K562 (cell line): ENCODE measurements at regions of chr6 and their contacts with region 1.

Region 1: DNA sequence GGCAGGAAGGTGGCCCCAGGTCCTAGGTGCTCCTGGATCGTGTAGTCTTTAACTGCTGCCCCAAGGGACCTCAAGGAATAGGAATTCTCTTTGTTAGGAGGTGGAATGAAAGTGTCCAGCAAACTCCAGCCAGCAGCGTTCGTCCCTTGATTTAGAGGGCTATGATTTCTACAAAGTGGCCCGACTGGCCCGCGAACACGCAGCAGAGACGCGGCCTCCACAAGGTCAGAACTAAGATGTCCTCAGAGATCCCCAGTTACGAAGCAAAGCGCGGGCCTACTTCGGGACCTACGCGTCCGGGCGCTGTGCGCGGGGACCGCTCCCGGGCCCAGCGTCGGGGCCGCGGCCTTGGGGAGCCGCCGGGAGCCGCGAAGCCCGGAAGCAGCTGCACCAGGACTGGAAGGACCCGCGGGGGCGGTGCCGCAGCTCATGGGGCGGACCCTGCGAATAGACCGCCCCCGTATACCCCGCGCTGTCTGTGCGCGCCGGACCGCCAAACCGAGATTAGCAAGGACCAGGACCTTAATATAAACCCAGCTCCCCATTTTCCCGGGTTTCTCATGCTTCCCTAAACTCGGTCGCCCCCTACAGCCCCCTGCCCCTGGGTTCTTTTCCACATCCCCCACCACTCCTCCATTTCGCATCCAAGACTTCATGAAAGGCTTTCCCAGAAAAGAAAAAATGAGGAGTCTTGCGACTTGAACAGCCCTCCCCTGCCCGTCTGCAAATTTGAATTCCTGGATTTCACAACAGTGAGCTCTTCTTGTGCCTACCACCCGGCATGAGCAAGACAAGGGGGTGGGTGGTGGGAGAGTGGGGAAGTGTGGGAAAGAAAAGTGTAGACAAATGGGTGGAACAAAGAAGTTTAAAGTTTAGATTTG is at the start of gene C6orf47:
- DNase-seq: peak; percentile 93 to 99 (median 96)
- ATAC-seq: peak; percentile 82
- H3K4me3 ChIP-seq: peak within 1 kb of the TSS; percentile 52
- H3K27ac ChIP-seq: peak within 1 kb of the TSS; percentile 80
- H3K4me1 ChIP-seq: peaks cover 47 to 65% of the 10 kb centered on the region in 2 experiments
- H3K27me3 ChIP-seq: no peaks in the 10 kb centered on the region
- CTCF ChIP-seq: no peak
- EP300 ChIP-seq: 0 out of 2 replicates have a peak, but pooled peaks have one; percentile 62
- POLR2A ChIP-seq: peak; percentile 93
- RAD21 ChIP-seq: peak; percentile 5 to 28; a peak in 3 of 4 replicates
- polyA plus RNA-seq, gene C6orf47: 0.14 to 0.27 TPM

Region 2: GRCh38 chr6:31619805-31620585 is 40.6 kb before region 1 on chr6:
- CTCF ChIA-PET with region 1: no interaction called
- POLR2A ChIA-PET with region 1: interaction called, 20 read pairs
- in situ Hi-C with region 1: no loop called
- intact Hi-C with region 1: loop called (anchors 1 kb)
- DNase-seq: peak; percentile 93 to 100 (median 97)
- ATAC-seq: peak; percentile 92
- H3K4me3 ChIP-seq: peak overlapping the region; percentile 96
- H3K27ac ChIP-seq: peak overlapping the region; percentile 98
- H3K4me1 ChIP-seq: peaks cover 28 to 37% of the 10 kb centered on the region in 2 experiments
- H3K27me3 ChIP-seq: no peaks in the 10 kb centered on the region
- CTCF ChIP-seq: no peak; a peak in 1 of 6 replicates
- EP300 ChIP-seq: peak; percentile 71
- POLR2A ChIP-seq: peak; percentile 99
- RAD21 ChIP-seq: peak in 1 of 2 experiments; percentile 18; a peak in 1 of 4 replicates

Region 3: DNA sequence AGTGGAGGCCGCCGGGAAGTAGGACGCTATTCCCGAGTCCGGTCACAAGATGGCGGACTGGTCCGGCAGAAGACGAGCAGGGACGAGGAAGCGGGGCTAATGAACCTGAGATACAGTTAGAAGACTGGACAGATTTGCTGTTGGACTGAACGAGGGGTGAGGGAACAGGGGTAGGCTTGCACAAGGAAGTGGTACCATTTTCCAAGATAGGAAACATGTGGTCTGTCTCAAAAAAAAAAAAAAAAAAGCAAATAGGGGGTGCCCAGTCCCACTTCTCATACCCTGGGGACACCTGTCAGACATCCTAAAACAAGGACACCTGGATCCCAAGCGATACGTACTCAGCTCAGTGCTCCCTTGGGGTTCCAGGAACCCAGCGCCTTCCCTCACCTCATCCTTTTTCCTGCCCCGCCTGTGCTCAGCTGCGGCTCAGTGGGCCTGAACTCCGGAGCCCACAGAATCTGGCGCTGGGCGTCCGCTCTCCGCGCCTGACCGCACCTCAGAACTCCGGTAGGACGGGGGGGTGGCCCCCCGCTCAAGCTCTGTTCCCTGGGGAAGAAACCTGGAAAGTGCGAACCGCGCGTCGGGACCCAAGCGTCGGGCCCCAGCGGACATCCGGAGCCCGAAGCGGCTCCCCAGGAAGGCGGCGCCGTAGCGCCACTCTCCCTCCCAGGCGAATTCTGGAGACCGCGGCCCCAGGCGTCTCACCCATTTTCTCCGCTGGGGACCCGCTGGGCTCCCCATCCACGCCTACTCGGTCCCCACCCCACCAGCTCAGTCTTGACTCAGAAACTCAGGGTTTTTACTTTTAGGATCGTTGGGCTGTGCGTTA is 20.4 kb after region 1 on chr6 and contains the start of gene LY6G5C:
- CTCF ChIA-PET with region 1: interaction called, 5 read pairs
- POLR2A ChIA-PET with region 1: interaction called, 33 read pairs
- in situ Hi-C with region 1: no loop called
- intact Hi-C with region 1: no loop called
- DNase-seq: peak; percentile 82 to 94 (median 88)
- ATAC-seq: peak; percentile 88
- H3K4me3 ChIP-seq: no peak within 1 kb of the TSS
- H3K27ac ChIP-seq: no peak within 1 kb of the TSS
- H3K4me1 ChIP-seq: peaks cover 10 to 24% of the 10 kb centered on the region in 2 experiments
- H3K27me3 ChIP-seq: no peaks in the 10 kb centered on the region
- CTCF ChIP-seq: peak; percentile 96 to 99 (median 99)
- EP300 ChIP-seq: peak; percentile 39; the same call in 1 of the 2 replicates
- POLR2A ChIP-seq: no peak
- RAD21 ChIP-seq: peak; percentile 99 to 100
- polyA plus RNA-seq, gene LY6G5C: 0.10 TPM in 1 of 2 experiments, not detected in the other

Region 4: DNA sequence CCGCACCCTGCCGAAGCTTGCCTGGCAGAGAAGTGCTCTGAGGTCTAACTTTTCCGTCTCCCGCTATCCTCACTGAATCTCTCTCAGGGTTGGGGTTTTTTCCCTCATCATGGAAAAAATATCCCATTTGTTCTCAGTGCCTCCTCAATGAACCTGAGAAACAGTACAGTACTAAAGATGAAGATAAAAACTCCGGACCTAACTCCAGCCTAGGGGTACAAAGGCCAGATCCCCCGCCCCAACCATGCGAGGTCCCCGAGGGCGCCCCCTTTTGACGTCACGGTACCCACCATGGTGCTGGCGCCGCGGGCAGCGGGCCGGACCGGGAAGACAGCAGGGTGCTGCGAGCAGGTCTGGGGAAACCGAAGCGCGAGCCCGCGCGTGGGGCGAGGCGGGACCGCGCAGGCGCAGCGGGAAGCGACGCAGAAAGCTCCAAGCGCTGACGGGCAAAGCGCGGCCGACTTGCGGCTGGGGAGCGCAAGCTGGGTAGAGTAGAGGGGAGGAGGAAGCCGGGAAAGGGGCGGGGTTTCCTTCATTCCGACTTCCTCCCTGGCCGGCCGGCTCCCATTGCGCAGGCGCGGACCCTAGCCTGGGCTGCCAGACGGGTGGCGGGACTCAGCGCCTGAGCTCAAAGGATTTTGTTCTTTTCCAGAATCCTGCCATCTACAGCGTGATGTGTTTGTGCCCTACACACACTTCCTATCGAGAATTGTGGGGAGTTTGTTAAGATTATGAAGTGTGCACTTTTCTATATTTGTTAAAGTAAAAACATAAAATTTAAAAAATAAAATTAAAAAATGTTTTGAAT is 146.0 kb after region 1 on chr6 and contains the start of gene LSM2:
- CTCF ChIA-PET with region 1: no interaction called
- POLR2A ChIA-PET with region 1: interaction called, 11 read pairs
- in situ Hi-C with region 1: no loop called
- intact Hi-C with region 1: no loop called
- DNase-seq: peak; percentile 100
- ATAC-seq: peak; percentile 98
- H3K4me3 ChIP-seq: peak within 1 kb of the TSS; percentile 66
- H3K27ac ChIP-seq: peak within 1 kb of the TSS; percentile 86
- H3K4me1 ChIP-seq: peaks cover 14 to 30% of the 10 kb centered on the region in 2 experiments
- H3K27me3 ChIP-seq: no peaks in the 10 kb centered on the region
- CTCF ChIP-seq: peak; percentile 20 to 66 (median 36); a peak in 5 of 6 replicates
- EP300 ChIP-seq: peak; percentile 32; the same call in 1 of the 2 replicates
- POLR2A ChIP-seq: peak; percentile 97
- RAD21 ChIP-seq: peak; percentile 28 to 42; a peak in 3 of 4 replicates
- polyA plus RNA-seq, gene LSM2: 405 to 407 TPM